ENCODE measurements at regions of chr11 and their contacts with region 1.

Region 1: GRCh38 chr11:119236490-119236889 is 30.4 kb downstream of the CBL start:
- DNase-seq: no peak
- H3K4me3 ChIP-seq: no peak overlapping the region
- H3K4me3 Mint-ChIP-seq: no peak overlapping the region
- H3K27ac ChIP-seq: no peak overlapping the region
- H3K27ac Mint-ChIP-seq: peak overlapping the region in 2 of 7 donors; percentile 22 to 23
- H3K4me1 ChIP-seq: peaks cover 33% of the 10 kb centered on the region
- H3K4me1 Mint-ChIP-seq: peaks cover 30 to 54% (median 39%) of the 10 kb centered on the region in 4 donors
- H3K27me3 ChIP-seq: no peaks in the 10 kb centered on the region
- H3K27me3 Mint-ChIP-seq: no peaks in the 10 kb centered on the region

Region 2: DNA sequence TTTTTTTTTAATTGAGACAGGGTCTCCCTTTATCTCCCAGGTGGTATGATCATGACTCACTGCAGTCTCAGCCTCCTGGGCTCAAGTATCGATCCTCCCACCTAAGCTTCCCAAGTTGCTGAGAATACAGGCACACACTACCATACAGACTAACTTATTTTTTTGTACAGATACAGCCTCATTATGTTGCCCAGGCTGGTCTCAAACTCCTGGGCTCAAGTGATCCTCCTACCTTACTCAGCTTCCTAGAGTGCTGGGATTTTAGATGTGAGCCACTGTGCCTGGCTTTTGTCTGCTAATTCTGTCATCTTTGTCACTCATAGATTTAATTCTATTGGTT is 13.2 kb after region 1 on chr11:
- CTCF ChIA-PET with region 1: no interaction called
- POLR2A ChIA-PET with region 1: interaction called, 3 read pairs
- intact Hi-C with region 1: loop called (anchors 1 kb)
- DNase-seq: no peak
- H3K4me3 ChIP-seq: no peak overlapping the region
- H3K4me3 Mint-ChIP-seq: peak overlapping the region in 1 of 8 donors; percentile 26
- H3K27ac ChIP-seq: no peak overlapping the region
- H3K27ac Mint-ChIP-seq: peak overlapping the region in 5 of 7 donors; percentile 22 to 57 (median 47)
- H3K4me1 ChIP-seq: peaks cover 19% of the 10 kb centered on the region
- H3K4me1 Mint-ChIP-seq: peaks cover 21 to 32% (median 23%) of the 10 kb centered on the region in 4 donors
- H3K27me3 ChIP-seq: no peaks in the 10 kb centered on the region
- H3K27me3 Mint-ChIP-seq: no peaks in the 10 kb centered on the region

Region 3: DNA sequence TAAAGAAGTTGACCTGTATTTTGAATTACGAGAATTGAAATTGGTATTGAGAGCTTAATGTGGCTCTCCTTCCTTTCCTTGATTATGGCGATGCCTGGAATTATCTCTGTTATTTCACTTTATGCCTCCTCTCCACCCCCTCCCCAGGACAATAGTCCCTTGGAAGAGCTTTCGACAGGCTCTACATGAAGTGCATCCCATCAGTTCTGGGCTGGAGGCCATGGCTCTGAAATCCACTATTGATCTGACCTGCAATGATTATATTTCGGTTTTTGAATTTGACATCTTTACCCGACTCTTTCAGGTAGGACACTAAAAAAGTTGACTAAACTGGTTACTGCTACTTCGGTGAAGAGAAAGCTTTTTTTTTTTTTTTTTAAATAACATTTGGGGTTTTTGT is 37.2 kb after region 1 on chr11:
- CTCF ChIA-PET with region 1: no interaction called
- POLR2A ChIA-PET with region 1: no interaction called
- intact Hi-C with region 1: no loop called
- DNase-seq: no peak
- H3K4me3 ChIP-seq: no peak overlapping the region
- H3K4me3 Mint-ChIP-seq: no peak overlapping the region
- H3K27ac ChIP-seq: no peak overlapping the region
- H3K27ac Mint-ChIP-seq: peak overlapping the region in 1 of 7 donors; percentile 50
- H3K4me1 ChIP-seq: no peaks in the 10 kb centered on the region
- H3K4me1 Mint-ChIP-seq: peaks cover 0 to 8% (median 4%) of the 10 kb centered on the region in 4 donors
- H3K27me3 ChIP-seq: no peaks in the 10 kb centered on the region
- H3K27me3 Mint-ChIP-seq: no peaks in the 10 kb centered on the region